Gastrocnemius medialis (tissue), 4 donors: ENCODE measurements at regions of chr3 and their contacts with region 1.

Region 1: GRCh38 chr3:17088602-17089313 is 204.0 kb downstream of the PLCL2 start:
- DNase-seq: peak; percentile 66 to 78
- ATAC-seq: peak; percentile 43 to 64
- H3K4me3 ChIP-seq: peak overlapping the region in 2 of 4 donors; percentile 19 to 29
- H3K27ac ChIP-seq: peak overlapping the region; percentile 91 to 94 (median 93)
- H3K4me1 ChIP-seq: peaks cover 52 to 59% of the 10 kb centered on the region in 2 donors
- H3K27me3 ChIP-seq: no peaks in the 10 kb centered on the region
- CTCF ChIP-seq: no peak
- POLR2A ChIP-seq: peak in 1 of 2 donors; percentile 25

Region 2: GRCh38 chr3:16741103-16741758 is 347.5 kb before region 1 on chr3:
- in situ Hi-C with region 1: no loop called
- intact Hi-C with region 1: loop called (anchors 5 kb)
- DNase-seq: peak; percentile 19 to 34
- ATAC-seq: peak in 1 of 2 donors; percentile 45
- H3K4me3 ChIP-seq: no peak overlapping the region
- H3K27ac ChIP-seq: peak overlapping the region; percentile 64 to 85 (median 78)
- H3K4me1 ChIP-seq: peaks cover 4 to 9% of the 10 kb centered on the region in 2 donors
- H3K27me3 ChIP-seq: no peaks in the 10 kb centered on the region
- CTCF ChIP-seq: no peak
- POLR2A ChIP-seq: no peak

Region 3: DNA sequence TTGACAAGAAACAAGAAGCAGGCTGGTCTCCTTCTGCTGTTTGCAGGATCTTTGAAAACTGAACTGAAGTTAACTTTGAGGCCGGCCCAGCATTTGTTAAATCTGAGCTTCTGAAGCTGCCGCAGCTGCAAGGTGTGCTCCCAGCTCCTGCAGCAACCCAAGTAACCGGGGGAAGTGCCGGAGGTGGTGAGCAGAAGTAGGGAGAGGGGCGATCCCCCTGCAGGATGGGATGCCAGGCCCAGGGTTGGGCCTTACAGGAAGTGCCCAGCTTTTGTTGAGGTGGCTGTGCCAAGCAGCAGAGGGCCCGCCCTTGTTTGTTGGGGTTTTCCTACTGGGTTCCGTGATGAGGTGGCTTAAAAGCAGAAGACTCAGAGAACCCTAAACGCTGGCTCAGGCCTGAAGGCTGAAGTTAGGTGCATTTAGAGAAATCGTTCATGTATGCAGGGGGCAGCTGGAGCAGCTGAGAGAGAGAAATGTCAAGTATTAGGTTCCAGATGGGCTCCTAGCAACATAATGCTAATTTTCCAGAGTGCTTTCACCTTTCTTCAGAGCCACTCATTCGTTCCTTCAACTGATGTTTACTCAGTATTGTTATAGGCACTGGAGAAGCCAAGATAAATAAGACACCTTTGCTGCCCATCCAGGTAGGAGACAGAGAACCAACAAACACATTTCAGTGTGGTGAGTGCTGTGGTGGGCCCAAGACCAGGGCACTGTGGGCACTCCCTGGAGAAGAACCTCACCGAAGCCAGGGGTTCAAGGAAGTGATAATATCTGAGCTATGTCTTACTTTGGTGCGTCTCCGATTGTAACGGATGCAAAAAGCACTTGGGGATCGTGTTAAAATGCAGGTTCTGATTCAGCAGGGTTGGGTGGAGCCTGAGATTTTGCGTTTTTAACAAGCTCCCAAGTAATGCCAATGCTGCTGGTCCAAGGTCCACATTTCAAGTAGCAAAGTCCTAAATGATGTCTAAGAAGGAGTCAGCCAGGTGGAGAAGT is 246.2 kb before region 1 on chr3:
- in situ Hi-C with region 1: no loop called
- intact Hi-C with region 1: loop called (anchors 5 kb)
- DNase-seq: peak; percentile 22 to 52
- ATAC-seq: peak in 1 of 2 donors; percentile 8
- H3K4me3 ChIP-seq: peak overlapping the region; percentile 43 to 51 (median 50)
- H3K27ac ChIP-seq: peak overlapping the region; percentile 73 to 90 (median 79)
- H3K4me1 ChIP-seq: peaks cover 71% of the 10 kb centered on the region in 2 donors
- H3K27me3 ChIP-seq: no peaks in the 10 kb centered on the region
- CTCF ChIP-seq: no peak
- POLR2A ChIP-seq: no peak

Region 4: GRCh38 chr3:16906682-16907081 is 182.1 kb before region 1 on chr3:
- in situ Hi-C with region 1: no loop called
- intact Hi-C with region 1: loop called (anchors 5 kb)
- DNase-seq: peak in 1 of 2 donors; percentile 57
- ATAC-seq: peak; percentile 90 to 96
- H3K4me3 ChIP-seq: peak overlapping the region in 3 of 4 donors; percentile 5 to 6 (median 5)
- H3K27ac ChIP-seq: peak overlapping the region; percentile 76 to 86 (median 84)
- H3K4me1 ChIP-seq: peaks cover 89 to 93% of the 10 kb centered on the region in 2 donors
- H3K27me3 ChIP-seq: no peaks in the 10 kb centered on the region
- CTCF ChIP-seq: no peak
- POLR2A ChIP-seq: no peak

Region 5: GRCh38 chr3:17190353-17191078 is 101.8 kb after region 1 on chr3:
- in situ Hi-C with region 1: no loop called
- intact Hi-C with region 1: loop called (anchors 5 kb)
- DNase-seq: peak; percentile 23 to 55
- ATAC-seq: peak; percentile 83 to 84
- H3K4me3 ChIP-seq: peak overlapping the region in 1 of 4 donors; percentile 11
- H3K27ac ChIP-seq: peak overlapping the region; percentile 76 to 86 (median 85)
- H3K4me1 ChIP-seq: peaks cover 45 to 55% of the 10 kb centered on the region in 2 donors
- H3K27me3 ChIP-seq: no peaks in the 10 kb centered on the region
- CTCF ChIP-seq: no peak
- POLR2A ChIP-seq: no peak

Region 6: DNA sequence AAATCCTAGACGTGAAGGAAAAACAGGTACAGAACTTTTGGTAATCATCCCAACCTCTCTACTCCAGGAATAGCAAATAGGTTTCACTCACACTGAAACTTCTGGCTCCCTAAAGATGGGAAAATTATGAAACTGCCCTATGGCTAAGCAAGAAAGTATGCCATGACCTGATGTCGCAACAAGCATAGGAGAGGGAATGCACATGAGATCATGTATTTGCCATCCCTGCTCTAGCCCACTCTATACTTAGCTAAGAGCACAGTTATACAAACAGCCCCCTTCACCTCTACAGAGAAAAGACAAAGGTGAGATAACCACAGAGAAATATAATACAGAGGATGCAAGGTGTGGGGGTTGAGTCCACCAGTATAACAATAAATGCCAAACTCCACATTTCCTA is 551.0 kb after region 1 on chr3:
- in situ Hi-C with region 1: no loop called
- intact Hi-C with region 1: loop called (anchors 5 kb)
- DNase-seq: peak; percentile 9 to 62
- ATAC-seq: peak; percentile 89 to 99
- H3K4me3 ChIP-seq: no peak overlapping the region
- H3K27ac ChIP-seq: peak overlapping the region in 2 of 4 donors; percentile 22 to 50
- H3K4me1 ChIP-seq: peaks cover 18 to 19% of the 10 kb centered on the region in 2 donors
- H3K27me3 ChIP-seq: no peaks in the 10 kb centered on the region
- CTCF ChIP-seq: no peak
- POLR2A ChIP-seq: no peak